ENCODE measurements at regions of chr17 and their contacts with region 1.

Region 1: GRCh38 chr17:75261336-75262111 is at the starts of genes GGA3 and MRPS7:
- DNase-seq: peak; percentile 98
- ATAC-seq: peak; percentile 96
- H3K4me3 ChIP-seq: peak within 1 kb of the TSS; percentile 79 to 96 (median 95)
- H3K4me3 Mint-ChIP-seq: peak within 1 kb of the TSS; percentile 97
- H3K27ac ChIP-seq: peak within 1 kb of the TSS; percentile 95 to 99
- H3K27ac Mint-ChIP-seq: peak within 1 kb of the TSS; percentile 100
- H3K4me1 ChIP-seq: peaks cover 25% of the 10 kb centered on the region in 2 donors
- H3K4me1 Mint-ChIP-seq: peaks cover 52% of the 10 kb centered on the region
- H3K27me3 ChIP-seq: no peaks in the 10 kb centered on the region
- H3K27me3 Mint-ChIP-seq: no peaks in the 10 kb centered on the region
- CTCF ChIP-seq: no peak
- total RNA-seq, gene GGA3: 134 and 135 TPM in 2 replicates
- total RNA-seq, gene MRPS7: 37.2 and 42.6 TPM in 2 replicates

Region 2: GRCh38 chr17:75238684-75239191 is 22.8 kb before region 1 on chr17:
- CTCF ChIA-PET with region 1: interaction called, 23 read pairs
- POLR2A ChIA-PET with region 1: interaction called, 19 read pairs
- intact Hi-C with region 1: no loop called
- DNase-seq: peak; percentile 75
- ATAC-seq: peak; percentile 61
- H3K4me3 ChIP-seq: no peak overlapping the region
- H3K4me3 Mint-ChIP-seq: peak overlapping the region; percentile 33
- H3K27ac ChIP-seq: no peak overlapping the region
- H3K27ac Mint-ChIP-seq: peak overlapping the region; percentile 92
- H3K4me1 ChIP-seq: peaks cover 10 to 40% of the 10 kb centered on the region in 2 donors
- H3K4me1 Mint-ChIP-seq: peaks cover 30% of the 10 kb centered on the region
- H3K27me3 ChIP-seq: no peaks in the 10 kb centered on the region
- H3K27me3 Mint-ChIP-seq: no peaks in the 10 kb centered on the region
- CTCF ChIP-seq: peak; percentile 83

Region 3: DNA sequence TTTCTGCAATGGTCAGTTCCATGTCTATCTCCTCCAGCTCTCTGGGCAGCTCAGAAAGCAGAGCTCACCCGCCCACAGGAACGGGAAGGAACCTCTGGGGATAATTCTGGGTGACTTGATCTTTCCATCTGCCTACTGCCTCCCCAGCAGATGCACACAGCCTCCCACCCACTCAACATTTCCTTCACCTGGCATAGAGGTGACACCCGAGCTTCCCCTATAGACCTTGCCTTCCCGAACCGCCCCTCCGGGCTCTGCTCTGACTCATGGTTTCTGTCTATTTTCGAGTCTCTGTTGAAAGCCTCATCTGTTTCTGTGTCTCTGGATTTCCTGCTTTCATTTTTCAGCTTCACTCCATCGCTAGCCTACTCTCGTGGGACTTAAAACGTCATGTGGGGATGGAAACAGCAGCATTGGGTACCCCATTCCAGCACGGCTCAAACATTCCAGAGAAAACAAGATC is 11.5 kb before region 1 on chr17:
- CTCF ChIA-PET with region 1: interaction called, 23 read pairs
- POLR2A ChIA-PET with region 1: interaction called, 41 read pairs
- intact Hi-C with region 1: no loop called
- DNase-seq: peak; percentile 50
- ATAC-seq: peak; percentile 82
- H3K4me3 ChIP-seq: peak overlapping the region in 1 of 5 experiments; percentile 1
- H3K4me3 Mint-ChIP-seq: peak overlapping the region; percentile 71
- H3K27ac ChIP-seq: peak overlapping the region; percentile 49 to 68
- H3K27ac Mint-ChIP-seq: peak overlapping the region; percentile 91
- H3K4me1 ChIP-seq: peaks cover 32 to 50% of the 10 kb centered on the region in 2 donors
- H3K4me1 Mint-ChIP-seq: peaks cover 56% of the 10 kb centered on the region
- H3K27me3 ChIP-seq: no peaks in the 10 kb centered on the region
- H3K27me3 Mint-ChIP-seq: no peaks in the 10 kb centered on the region
- CTCF ChIP-seq: no peak

Region 4: GRCh38 chr17:75371339-75371738 is 109.8 kb after region 1 on chr17:
- CTCF ChIA-PET with region 1: no interaction called
- POLR2A ChIA-PET with region 1: no interaction called
- intact Hi-C with region 1: no loop called
- DNase-seq: peak; percentile 73
- ATAC-seq: peak; percentile 62
- H3K4me3 ChIP-seq: peak overlapping the region in 1 of 5 experiments; percentile 3
- H3K4me3 Mint-ChIP-seq: peak overlapping the region; percentile 74
- H3K27ac ChIP-seq: peak overlapping the region; percentile 42 to 76
- H3K27ac Mint-ChIP-seq: peak overlapping the region; percentile 84
- H3K4me1 ChIP-seq: peaks cover 64 to 85% of the 10 kb centered on the region in 2 donors
- H3K4me1 Mint-ChIP-seq: peaks cover 80% of the 10 kb centered on the region
- H3K27me3 ChIP-seq: no peaks in the 10 kb centered on the region
- H3K27me3 Mint-ChIP-seq: no peaks in the 10 kb centered on the region
- CTCF ChIP-seq: no peak

Region 5: DNA sequence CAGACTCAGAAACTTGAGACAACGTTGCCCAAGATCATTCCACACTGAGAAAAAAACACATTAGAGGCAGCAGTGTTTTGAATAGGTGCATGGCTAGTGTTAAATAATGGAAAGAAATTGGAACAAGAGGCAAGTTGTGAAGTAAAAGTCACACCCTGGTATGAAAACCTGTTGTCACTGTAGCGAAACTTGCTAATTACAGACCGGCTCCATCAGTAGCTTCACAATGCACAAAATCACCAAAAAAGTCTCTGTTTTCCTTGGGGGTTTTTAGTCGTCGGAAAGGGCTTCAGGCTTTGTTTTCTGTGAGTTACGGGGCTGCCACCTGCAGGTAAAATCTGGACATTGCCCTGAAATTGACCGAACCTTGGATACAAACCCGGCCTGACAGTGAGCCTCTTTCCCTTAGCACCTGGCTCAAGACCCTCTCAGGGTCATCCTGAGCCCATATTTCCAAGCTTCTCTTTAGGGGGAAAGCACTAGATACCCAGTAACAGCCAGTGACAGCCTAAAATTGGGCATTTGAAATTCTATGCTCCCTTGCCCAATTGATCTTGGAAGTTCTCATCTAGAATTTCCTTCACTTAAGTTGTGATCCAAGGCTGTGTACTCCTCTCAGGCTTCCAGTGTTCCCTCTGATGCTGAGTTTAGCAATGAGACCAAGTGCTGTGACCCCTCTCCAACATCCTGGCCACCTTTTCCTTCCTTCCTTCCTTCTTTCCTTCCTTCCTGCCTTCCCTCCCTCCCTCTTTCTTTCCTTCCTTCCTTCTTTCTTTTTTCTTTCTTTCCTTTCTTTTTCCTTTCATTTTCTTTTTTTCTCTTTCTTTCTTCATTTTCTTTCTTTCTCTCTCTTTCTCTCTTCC is 151.2 kb after region 1 on chr17:
- CTCF ChIA-PET with region 1: interaction called, 13 read pairs
- POLR2A ChIA-PET with region 1: no interaction called
- intact Hi-C with region 1: no loop called
- DNase-seq: peak; percentile 90
- ATAC-seq: peak; percentile 94
- H3K4me3 ChIP-seq: peak overlapping the region in 4 of 5 experiments; percentile 9 to 30 (median 23)
- H3K4me3 Mint-ChIP-seq: peak overlapping the region; percentile 68
- H3K27ac ChIP-seq: no peak overlapping the region
- H3K27ac Mint-ChIP-seq: peak overlapping the region; percentile 62
- H3K4me1 ChIP-seq: peaks cover 7 to 14% of the 10 kb centered on the region in 2 donors
- H3K4me1 Mint-ChIP-seq: peaks cover 13% of the 10 kb centered on the region
- H3K27me3 ChIP-seq: no peaks in the 10 kb centered on the region
- H3K27me3 Mint-ChIP-seq: no peaks in the 10 kb centered on the region
- CTCF ChIP-seq: peak; percentile 79

Region 6: GRCh38 chr17:75589012-75589918 is 327.7 kb after region 1 on chr17:
- CTCF ChIA-PET with region 1: no interaction called
- POLR2A ChIA-PET with region 1: no interaction called
- intact Hi-C with region 1: loop called (anchors 1 kb)
- DNase-seq: peak; percentile 95
- ATAC-seq: peak; percentile 84
- H3K4me3 ChIP-seq: peak overlapping the region in 4 of 5 experiments; percentile 80 to 95 (median 84)
- H3K4me3 Mint-ChIP-seq: peak overlapping the region; percentile 86
- H3K27ac ChIP-seq: peak overlapping the region; percentile 80 to 89
- H3K27ac Mint-ChIP-seq: peak overlapping the region; percentile 81
- H3K4me1 ChIP-seq: peaks cover 4 to 20% of the 10 kb centered on the region in 2 donors
- H3K4me1 Mint-ChIP-seq: peaks cover 19% of the 10 kb centered on the region
- H3K27me3 ChIP-seq: no peaks in the 10 kb centered on the region
- H3K27me3 Mint-ChIP-seq: no peaks in the 10 kb centered on the region
- CTCF ChIP-seq: peak; percentile 59

Measured in B cell (primary cell).